ENCODE measurements at regions of chr17 and their contacts with region 1.

Region 1: GRCh38 chr17:17760872-17761550 is 75.8 kb downstream of the SREBF1 start:
- DNase-seq: no peak
- H3K4me3 ChIP-seq: no peak overlapping the region
- H3K27me3 ChIP-seq: no peaks in the 10 kb centered on the region
- CTCF ChIP-seq: no peak

Region 2: GRCh38 chr17:17736205-17737183 is 24.5 kb before region 1 on chr17:
- CTCF ChIA-PET with region 1: no interaction called
- POLR2A ChIA-PET with region 1: no interaction called
- DNase-seq: no peak
- H3K4me3 ChIP-seq: no peak overlapping the region
- H3K27me3 ChIP-seq: no peaks in the 10 kb centered on the region
- CTCF ChIP-seq: no peak

Region 3: DNA sequence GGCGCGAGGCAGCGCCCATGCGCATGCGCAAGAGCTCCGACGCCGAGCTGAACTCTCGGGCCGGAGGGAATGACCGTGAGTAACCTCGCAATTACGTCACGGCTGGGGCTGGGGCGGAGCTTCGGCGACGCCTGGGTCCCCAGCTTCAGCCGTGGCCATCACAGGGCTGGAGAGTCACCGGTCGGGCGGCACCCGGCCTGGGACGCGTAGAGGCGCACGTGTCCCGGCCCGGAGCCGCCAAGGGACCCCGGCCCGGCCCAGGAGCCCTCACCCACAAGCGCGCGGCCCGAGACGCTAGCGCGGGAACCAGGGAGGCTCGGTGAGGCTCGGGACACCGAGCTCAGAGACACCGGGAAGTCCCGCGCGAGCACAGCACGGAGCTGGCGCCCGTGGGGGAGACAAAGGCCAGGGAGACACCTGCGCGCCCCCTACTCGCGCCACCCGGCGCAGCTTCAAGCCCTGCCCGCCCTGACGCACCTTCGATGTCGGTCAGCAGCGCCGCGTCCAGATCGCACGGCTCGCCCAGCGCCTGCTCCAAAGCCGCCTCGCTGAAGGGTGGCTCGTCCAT is 75.3 kb after region 1 on chr17:
- CTCF ChIA-PET with region 1: no interaction called
- POLR2A ChIA-PET with region 1: interaction called, 13 read pairs
- DNase-seq: peak; percentile 58
- H3K4me3 ChIP-seq: peak overlapping the region; percentile 90
- H3K27me3 ChIP-seq: no peaks in the 10 kb centered on the region
- CTCF ChIP-seq: no peak